HepG2 (cell line): ENCODE measurements at regions of chr13 and their contacts with region 1.

Region 1: GRCh38 chr13:26673890-26674289 is 86.7 kb downstream of the GPR12 start:
- DNase-seq: no peak
- ATAC-seq: no peak
- H3K4me3 ChIP-seq: no peak overlapping the region
- H3K27ac ChIP-seq: no peak overlapping the region
- H3K4me1 ChIP-seq: no peaks in the 10 kb centered on the region
- H3K27me3 ChIP-seq: no peaks in the 10 kb centered on the region
- CTCF ChIP-seq: no peak
- EP300 ChIP-seq: no peak
- POLR2A ChIP-seq: no peak
- RAD21 ChIP-seq: no peak

Region 2: GRCh38 chr13:25625414-25625813 is 1048.5 kb before region 1 on chr13:
- CTCF ChIA-PET with region 1: no interaction called
- POLR2A ChIA-PET with region 1: no interaction called
- in situ Hi-C with region 1: no loop called
- intact Hi-C with region 1: loop called (anchors 5 kb)
- DNase-seq: no peak
- ATAC-seq: no peak
- H3K4me3 ChIP-seq: no peak overlapping the region
- H3K27ac ChIP-seq: no peak overlapping the region
- H3K4me1 ChIP-seq: no peaks in the 10 kb centered on the region
- H3K27me3 ChIP-seq: no peaks in the 10 kb centered on the region
- CTCF ChIP-seq: no peak
- EP300 ChIP-seq: no peak
- POLR2A ChIP-seq: no peak
- RAD21 ChIP-seq: no peak

Region 3: DNA sequence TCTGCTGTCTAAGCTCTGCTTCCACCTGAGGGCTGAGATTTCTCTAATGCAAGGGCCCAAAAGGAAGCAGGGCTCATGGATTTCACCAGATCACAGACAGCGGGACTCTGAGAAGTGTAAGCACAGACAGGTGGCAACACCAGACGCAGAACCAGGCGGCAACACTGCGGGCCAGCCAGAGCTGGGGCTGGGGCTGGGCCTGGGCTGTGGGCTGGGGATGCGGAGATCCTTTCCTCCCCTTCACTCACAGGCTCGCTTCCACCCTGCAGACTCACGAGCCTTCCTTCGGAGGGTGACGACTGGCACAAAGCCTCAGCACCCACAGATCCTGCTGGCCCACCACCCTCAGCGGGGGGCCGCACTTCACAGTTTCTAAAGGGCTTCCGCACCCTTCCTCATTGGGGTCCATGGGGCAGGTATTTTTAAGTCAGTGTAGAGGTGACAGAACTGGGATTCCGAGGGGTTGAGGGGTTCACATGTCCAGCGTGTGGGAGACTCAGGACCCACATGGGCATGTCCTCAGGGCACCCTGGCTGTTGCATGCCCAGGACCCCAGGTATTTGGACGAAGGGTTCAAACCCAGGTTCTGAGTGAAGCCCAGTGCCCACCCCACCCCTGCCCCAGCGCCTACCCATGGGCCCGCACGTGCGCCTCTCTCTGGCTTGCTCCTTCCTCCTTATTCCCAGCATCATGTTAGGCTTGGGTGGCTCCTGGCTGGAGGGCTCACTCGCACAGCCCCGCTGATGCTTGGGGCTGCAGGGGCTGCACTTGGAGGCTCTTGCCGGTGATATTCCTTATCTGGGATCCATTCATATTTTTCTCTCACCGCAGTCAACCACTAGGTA is 224.0 kb after region 1 on chr13:
- CTCF ChIA-PET with region 1: no interaction called
- POLR2A ChIA-PET with region 1: no interaction called
- in situ Hi-C with region 1: no loop called
- intact Hi-C with region 1: no loop called
- DNase-seq: no peak
- ATAC-seq: no peak
- H3K4me3 ChIP-seq: no peak overlapping the region
- H3K27ac ChIP-seq: no peak overlapping the region
- H3K4me1 ChIP-seq: peaks cover 20% of the 10 kb centered on the region; the same call in 1 of the 2 replicates
- H3K27me3 ChIP-seq: peaks cover 0 to 33% of the 10 kb centered on the region in 2 experiments; a peak in 3 of 5 replicates
- CTCF ChIP-seq: no peak
- EP300 ChIP-seq: no peak
- POLR2A ChIP-seq: no peak
- RAD21 ChIP-seq: no peak